Ascending aorta (tissue), 2 donors: ENCODE measurements at regions of chr5 and their contacts with region 1.

Region 1: GRCh38 chr5:43556857-43557542 is at the start of gene PAIP1:
- DNase-seq: peak; percentile 9 to 88
- H3K4me3 ChIP-seq: peak within 1 kb of the TSS; percentile 79 to 90
- H3K27ac ChIP-seq: peak within 1 kb of the TSS; percentile 96
- H3K4me1 ChIP-seq: peaks cover 2 to 25% of the 10 kb centered on the region in 2 donors
- H3K27me3 ChIP-seq: no peaks in the 10 kb centered on the region
- CTCF ChIP-seq: peak in 2 of 3 experiments; percentile 48 to 65
- total RNA-seq, gene PAIP1: 93.6 TPM

Region 2: GRCh38 chr5:43514816-43515677 is 42.0 kb before region 1 on chr5 and contains the start of gene C5orf34:
- intact Hi-C with region 1: loop called (anchors 1 kb)
- DNase-seq: peak; percentile 89 to 98
- H3K4me3 ChIP-seq: peak within 1 kb of the TSS; percentile 39 to 87
- H3K27ac ChIP-seq: peak within 1 kb of the TSS; percentile 84 to 88
- H3K4me1 ChIP-seq: peaks cover 0 to 3% of the 10 kb centered on the region in 2 donors
- H3K27me3 ChIP-seq: no peaks in the 10 kb centered on the region
- CTCF ChIP-seq: no peak
- total RNA-seq, gene C5orf34: not detected

Region 3: GRCh38 chr5:43602461-43603343 is 45.7 kb after region 1 on chr5 and contains the start of gene NNT:
- intact Hi-C with region 1: loop called (anchors 1 kb)
- DNase-seq: peak; percentile 12 to 87
- H3K4me3 ChIP-seq: peak within 1 kb of the TSS; percentile 82 to 97
- H3K27ac ChIP-seq: peak within 1 kb of the TSS; percentile 86 to 95
- H3K4me1 ChIP-seq: peaks cover 2 to 9% of the 10 kb centered on the region in 2 donors
- H3K27me3 ChIP-seq: no peaks in the 10 kb centered on the region
- CTCF ChIP-seq: no peak
- total RNA-seq, gene NNT: 13.3 TPM

Region 4: DNA sequence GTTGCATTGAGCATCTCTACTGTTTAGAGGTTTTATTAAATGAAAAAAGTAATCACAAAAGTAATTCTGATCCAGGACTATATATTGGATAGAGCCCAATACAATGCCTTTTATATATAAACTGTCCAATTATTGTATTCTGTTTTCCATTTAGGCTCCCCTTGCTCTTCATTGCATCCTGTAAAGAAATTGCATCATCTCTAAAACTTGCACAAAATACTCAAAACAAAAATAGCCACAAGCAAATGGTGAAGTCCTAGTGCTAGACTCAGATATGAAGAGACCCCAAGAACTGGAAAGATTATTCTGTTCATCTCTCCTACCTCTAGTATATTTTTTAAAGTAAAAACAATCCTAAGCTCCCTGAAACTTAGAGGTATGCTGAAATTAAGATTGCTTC is 241.7 kb after region 1 on chr5:
- intact Hi-C with region 1: no loop called
- DNase-seq: no peak
- H3K4me3 ChIP-seq: no peak overlapping the region
- H3K27ac ChIP-seq: no peak overlapping the region
- H3K4me1 ChIP-seq: no peaks in the 10 kb centered on the region
- H3K27me3 ChIP-seq: no peaks in the 10 kb centered on the region
- CTCF ChIP-seq: no peak

Region 5: GRCh38 chr5:44808435-44809214 is 1251.6 kb after region 1 on chr5 and contains the start of gene MRPS30:
- intact Hi-C with region 1: loop called (anchors 2 kb)
- DNase-seq: peak; percentile 78 to 97
- H3K4me3 ChIP-seq: peak within 1 kb of the TSS; percentile 66 to 79
- H3K27ac ChIP-seq: peak within 1 kb of the TSS; percentile 62 to 81
- H3K4me1 ChIP-seq: peaks cover 2 to 8% of the 10 kb centered on the region in 2 donors
- H3K27me3 ChIP-seq: no peaks in the 10 kb centered on the region
- CTCF ChIP-seq: peak in 2 of 3 experiments; percentile 18 to 43
- total RNA-seq, gene MRPS30: 39.9 TPM